Gastrocnemius medialis (tissue), 4 donors: ENCODE measurements at regions of chr6 and their contacts with region 1.

Region 1: DNA sequence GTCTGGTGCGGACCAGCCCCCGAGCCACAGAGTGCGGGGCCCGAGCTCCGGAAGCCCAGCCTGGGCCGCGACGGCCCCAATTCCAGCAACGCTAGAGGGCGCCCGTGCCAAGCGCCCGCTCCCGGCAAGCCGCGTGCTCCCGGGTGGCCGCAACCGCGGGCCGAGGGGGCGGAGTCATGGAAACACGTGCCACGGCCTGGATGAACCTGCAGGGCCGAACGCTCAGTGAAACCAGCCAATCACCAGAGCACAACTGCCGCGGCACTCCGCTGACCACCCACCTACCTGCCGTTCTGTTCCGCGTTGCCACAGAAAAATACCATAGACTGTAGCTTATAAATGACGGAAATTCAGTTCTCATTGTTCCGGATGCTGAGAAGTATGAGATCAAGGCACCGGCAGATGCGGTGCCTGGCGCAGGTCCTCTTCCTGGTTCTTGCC is 85.7 kb upstream of the FOXC1 start:
- DNase-seq: peak; percentile 47 to 66
- ATAC-seq: peak; percentile 40 to 56
- H3K4me3 ChIP-seq: peak overlapping the region in 3 of 4 donors; percentile 14 to 37 (median 16)
- H3K27ac ChIP-seq: no peak overlapping the region
- H3K4me1 ChIP-seq: peaks cover 18 to 22% of the 10 kb centered on the region in 2 donors
- H3K27me3 ChIP-seq: peaks cover 13 to 24% (median 17%) of the 10 kb centered on the region in 3 donors
- CTCF ChIP-seq: peak; percentile 31 to 75 (median 64)
- POLR2A ChIP-seq: no peak

Region 2: DNA sequence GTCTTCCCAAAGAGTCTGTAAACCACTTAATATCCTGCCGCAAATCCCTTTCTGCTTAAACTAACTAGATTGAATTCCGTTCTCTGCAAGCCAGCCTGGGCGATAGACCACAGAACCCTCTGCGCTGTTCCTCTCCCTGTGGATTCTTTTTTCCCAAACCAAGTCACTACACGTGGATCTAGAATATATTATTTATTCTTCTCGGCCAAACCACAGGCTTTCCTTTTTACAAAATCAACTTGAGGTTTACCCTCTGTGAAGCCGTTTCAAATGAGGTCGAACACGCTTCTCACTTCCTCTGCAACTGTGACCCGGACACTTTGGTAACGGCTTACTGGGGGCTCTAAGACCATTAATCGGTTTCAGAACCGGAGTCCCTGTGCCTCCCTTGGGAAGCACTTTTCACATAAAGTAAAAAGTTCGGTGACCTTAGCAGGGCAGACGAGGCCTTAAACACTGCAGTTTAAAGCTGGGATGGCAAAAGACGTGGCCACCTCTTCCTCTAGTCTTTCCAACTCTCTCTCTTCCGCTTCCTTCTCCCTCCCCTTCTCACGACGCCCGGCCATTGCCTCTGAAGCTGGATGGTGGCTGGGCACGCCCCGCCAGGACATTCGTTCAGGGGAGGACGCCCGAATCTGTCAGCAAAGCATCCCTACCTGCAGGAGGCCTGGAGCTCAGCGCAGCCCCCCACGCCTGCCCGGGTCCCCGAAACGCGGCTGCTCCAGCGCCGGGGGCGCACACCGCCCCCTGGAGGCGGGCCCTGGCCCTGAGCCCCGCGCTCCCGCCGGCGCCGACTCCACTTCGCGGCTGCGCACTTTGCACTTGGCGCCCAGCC is 30.6 kb after region 1 on chr6:
- in situ Hi-C with region 1: no loop called
- intact Hi-C with region 1: loop called (anchors 1 kb)
- DNase-seq: peak; percentile 49 to 65
- ATAC-seq: peak; percentile 53 to 57
- H3K4me3 ChIP-seq: peak overlapping the region; percentile 64 to 83 (median 74)
- H3K27ac ChIP-seq: peak overlapping the region; percentile 67 to 81 (median 76)
- H3K4me1 ChIP-seq: peaks cover 4 to 5% of the 10 kb centered on the region in 2 donors
- H3K27me3 ChIP-seq: no peaks in the 10 kb centered on the region
- CTCF ChIP-seq: peak; percentile 51 to 89 (median 80)
- POLR2A ChIP-seq: peak; percentile 57 to 64

Region 3: DNA sequence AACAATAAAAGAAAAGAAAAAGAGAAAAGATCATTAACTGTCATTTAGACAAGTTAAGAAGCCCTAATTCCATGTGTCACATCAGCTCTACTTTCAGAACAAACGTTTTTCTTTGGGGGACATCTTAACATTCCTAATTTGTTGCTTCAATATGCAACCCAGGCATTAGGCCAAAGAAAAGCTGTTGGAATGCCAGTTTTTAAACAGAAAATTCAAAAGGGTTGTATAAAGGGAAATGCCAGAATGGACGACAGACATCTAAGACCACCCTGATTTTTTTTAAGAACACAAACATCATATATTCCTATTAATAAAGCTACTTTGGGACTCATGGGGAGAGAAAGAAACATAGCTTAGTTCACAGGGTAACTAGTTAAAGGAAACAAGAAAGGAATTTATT is 406.3 kb after region 1 on chr6:
- in situ Hi-C with region 1: no loop called
- intact Hi-C with region 1: no loop called
- DNase-seq: no peak
- ATAC-seq: no peak
- H3K4me3 ChIP-seq: no peak overlapping the region
- H3K27ac ChIP-seq: no peak overlapping the region
- H3K4me1 ChIP-seq: no peaks in the 10 kb centered on the region
- H3K27me3 ChIP-seq: no peaks in the 10 kb centered on the region
- CTCF ChIP-seq: no peak
- POLR2A ChIP-seq: no peak